IMR-90 (cell line): ENCODE measurements at regions of chrX and their contacts with region 1.

Region 1: DNA sequence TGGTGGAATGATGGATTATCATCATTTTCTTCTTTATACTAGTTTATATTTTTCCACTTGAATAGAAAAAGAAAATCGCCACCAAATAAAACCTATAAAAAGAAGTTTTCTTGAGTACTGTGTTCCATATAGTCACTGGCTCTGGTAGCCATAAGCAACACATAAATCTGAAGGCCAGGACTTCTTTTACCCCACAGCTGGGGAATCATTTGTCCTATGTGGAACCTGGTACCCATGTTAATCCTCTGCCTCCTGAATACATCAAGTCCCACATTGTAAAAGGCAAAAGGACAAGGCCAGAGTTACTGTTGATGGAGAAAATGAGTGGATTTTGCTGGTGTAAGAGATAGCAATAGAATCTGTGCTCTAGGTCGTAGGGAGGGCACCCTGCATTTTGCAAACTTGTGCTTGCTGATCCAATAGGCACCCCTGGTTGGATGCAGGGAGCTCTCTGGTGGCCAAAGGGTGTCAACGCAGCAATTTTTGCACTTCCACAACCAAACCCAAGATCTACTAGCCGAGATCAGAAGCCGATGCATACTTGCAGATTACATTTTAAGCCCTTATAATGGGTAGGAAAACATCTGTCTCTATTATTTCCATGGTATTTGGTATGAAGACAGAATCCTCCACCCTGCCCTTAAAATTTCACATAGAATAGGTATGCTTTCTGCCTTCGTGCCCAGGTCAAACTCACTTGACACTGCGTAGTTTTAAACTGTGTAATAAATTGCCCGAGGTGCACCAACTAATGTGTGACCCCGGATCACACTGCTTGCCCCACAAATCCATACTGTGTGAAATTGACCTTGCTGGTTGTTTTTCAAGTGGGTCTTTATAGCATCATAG is 146.2 kb upstream of the SCML1 start:
- DNase-seq: peak; percentile 80
- ATAC-seq: peak; percentile 87
- H3K4me3 ChIP-seq: no peak overlapping the region
- H3K27ac ChIP-seq: peak overlapping the region; percentile 33; the same call in 1 of the 2 replicates
- H3K4me1 ChIP-seq: peaks cover 5% of the 10 kb centered on the region
- H3K27me3 ChIP-seq: no peaks in the 10 kb centered on the region
- CTCF ChIP-seq: peak; percentile 80
- POLR2A ChIP-seq: no peak
- RAD21 ChIP-seq: peak; percentile 83

Region 2: GRCh38 chrX:17120816-17121215 is 470.3 kb before region 1 on chrX:
- CTCF ChIA-PET with region 1: no interaction called
- POLR2A ChIA-PET with region 1: no interaction called
- dilution Hi-C with region 1: no loop called
- in situ Hi-C with region 1: no loop called
- intact Hi-C with region 1: loop called (anchors 5 kb)
- DNase-seq: no peak
- ATAC-seq: no peak
- H3K4me3 ChIP-seq: no peak overlapping the region
- H3K27ac ChIP-seq: no peak overlapping the region
- H3K4me1 ChIP-seq: no peaks in the 10 kb centered on the region
- H3K27me3 ChIP-seq: peaks cover 1% of the 10 kb centered on the region; the same call in 1 of the 2 replicates
- CTCF ChIP-seq: no peak
- POLR2A ChIP-seq: no peak
- RAD21 ChIP-seq: no peak

Region 3: GRCh38 chrX:17242470-17242869 is 348.6 kb before region 1 on chrX:
- CTCF ChIA-PET with region 1: interaction called, 9 read pairs
- POLR2A ChIA-PET with region 1: no interaction called
- dilution Hi-C with region 1: no loop called
- in situ Hi-C with region 1: no loop called
- intact Hi-C with region 1: loop called (anchors 1 kb)
- DNase-seq: peak; percentile 55
- ATAC-seq: peak; percentile 88
- H3K4me3 ChIP-seq: no peak overlapping the region
- H3K27ac ChIP-seq: no peak overlapping the region
- H3K4me1 ChIP-seq: no peaks in the 10 kb centered on the region
- H3K27me3 ChIP-seq: peaks cover 6% of the 10 kb centered on the region
- CTCF ChIP-seq: peak; percentile 76
- POLR2A ChIP-seq: no peak
- RAD21 ChIP-seq: peak; percentile 70

Region 4: DNA sequence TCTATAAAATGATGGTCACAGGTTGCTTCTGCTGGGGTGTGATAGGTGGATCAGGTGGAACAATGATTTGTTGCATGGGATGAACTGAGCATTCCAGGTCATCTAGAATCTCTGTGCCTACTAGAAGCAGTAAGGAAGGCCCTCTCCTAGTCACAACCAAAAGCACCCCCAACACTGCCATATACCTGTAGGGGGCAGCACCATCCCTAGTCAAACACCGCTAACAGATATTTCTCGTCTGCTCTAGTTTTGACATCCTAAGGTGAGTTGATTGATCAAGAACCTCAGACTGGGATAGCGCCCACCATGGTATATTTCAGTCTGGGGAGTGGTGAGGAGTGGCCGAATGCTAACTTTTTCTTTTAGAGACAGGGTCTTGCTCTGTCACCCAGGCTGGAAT is 55.9 kb before region 1 on chrX:
- CTCF ChIA-PET with region 1: interaction called, 3 read pairs
- POLR2A ChIA-PET with region 1: no interaction called
- dilution Hi-C with region 1: no loop called
- in situ Hi-C with region 1: no loop called
- intact Hi-C with region 1: loop called (anchors 1 kb)
- DNase-seq: peak; percentile 20
- ATAC-seq: no peak; the same call in 1 of the 2 replicates
- H3K4me3 ChIP-seq: no peak overlapping the region
- H3K27ac ChIP-seq: no peak overlapping the region
- H3K4me1 ChIP-seq: no peaks in the 10 kb centered on the region
- H3K27me3 ChIP-seq: no peaks in the 10 kb centered on the region; the same call in none of the 2 replicates
- CTCF ChIP-seq: peak; percentile 52
- POLR2A ChIP-seq: no peak
- RAD21 ChIP-seq: peak; percentile 71

Region 5: GRCh38 chrX:17564689-17565409 is 26.3 kb before region 1 on chrX:
- CTCF ChIA-PET with region 1: no interaction called
- POLR2A ChIA-PET with region 1: no interaction called
- dilution Hi-C with region 1: no loop called
- in situ Hi-C with region 1: no loop called
- intact Hi-C with region 1: no loop called
- DNase-seq: no peak
- ATAC-seq: no peak
- H3K4me3 ChIP-seq: no peak overlapping the region
- H3K27ac ChIP-seq: no peak overlapping the region
- H3K4me1 ChIP-seq: peaks cover 11% of the 10 kb centered on the region
- H3K27me3 ChIP-seq: 0 out of 2 replicates have a peak, but pooled peaks cover 2% of the 10 kb centered on the region
- CTCF ChIP-seq: no peak
- POLR2A ChIP-seq: no peak
- RAD21 ChIP-seq: no peak

Region 6: GRCh38 chrX:19280636-19281035 is 1689.5 kb after region 1 on chrX:
- CTCF ChIA-PET with region 1: no interaction called
- POLR2A ChIA-PET with region 1: no interaction called
- dilution Hi-C with region 1: no loop called
- in situ Hi-C with region 1: no loop called
- intact Hi-C with region 1: no loop called
- DNase-seq: no peak
- ATAC-seq: no peak
- H3K4me3 ChIP-seq: no peak overlapping the region
- H3K27ac ChIP-seq: no peak overlapping the region
- H3K4me1 ChIP-seq: no peaks in the 10 kb centered on the region
- H3K27me3 ChIP-seq: no peaks in the 10 kb centered on the region
- CTCF ChIP-seq: no peak
- POLR2A ChIP-seq: no peak
- RAD21 ChIP-seq: no peak